ENCODE measurements at regions of chr1 and their contacts with region 1.

Region 1: DNA sequence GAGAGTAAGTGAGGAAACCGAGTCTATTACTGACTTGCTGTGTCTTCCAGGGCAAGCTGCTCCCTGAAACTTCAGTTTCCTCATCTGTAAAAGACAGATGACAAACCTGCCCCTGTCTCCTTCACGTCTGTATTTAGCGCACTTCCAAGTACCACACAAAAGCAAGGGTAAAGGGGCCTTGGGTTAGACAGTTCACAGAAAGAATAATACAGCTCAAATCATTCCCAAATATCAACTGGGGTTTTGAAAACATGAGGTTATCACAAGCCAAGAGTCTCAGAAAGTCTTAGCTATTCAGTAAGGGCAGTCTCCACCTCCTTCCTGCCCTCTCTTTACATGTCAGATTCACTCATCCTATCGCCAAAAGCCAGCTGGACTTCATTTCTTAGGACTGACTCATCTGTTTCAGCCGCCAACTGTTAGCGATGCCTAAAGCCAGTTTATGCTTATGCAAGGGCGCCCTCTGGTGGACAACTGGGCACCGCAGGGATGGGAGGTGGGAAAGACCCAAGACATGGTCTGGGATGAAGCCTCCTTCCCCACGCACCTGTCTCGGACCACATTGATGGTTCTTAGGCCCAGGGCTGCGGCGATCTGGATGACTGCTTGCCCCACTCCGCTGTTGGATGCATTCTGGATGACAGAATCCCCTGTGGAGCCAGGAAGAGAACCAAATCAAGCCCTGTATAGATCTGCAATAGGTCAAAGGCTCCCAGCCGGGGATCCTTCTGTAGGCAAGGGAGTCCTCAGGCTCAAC is 21.1 kb upstream of the SRSF4 start:
- DNase-seq: peak; percentile 94
- H3K4me3 ChIP-seq: no peak overlapping the region
- H3K27ac ChIP-seq: peak overlapping the region; percentile 53
- H3K4me1 ChIP-seq: peaks cover 12% of the 10 kb centered on the region
- H3K27me3 ChIP-seq: no peaks in the 10 kb centered on the region
- CTCF ChIP-seq: peak; percentile 97 to 98

Region 2: DNA sequence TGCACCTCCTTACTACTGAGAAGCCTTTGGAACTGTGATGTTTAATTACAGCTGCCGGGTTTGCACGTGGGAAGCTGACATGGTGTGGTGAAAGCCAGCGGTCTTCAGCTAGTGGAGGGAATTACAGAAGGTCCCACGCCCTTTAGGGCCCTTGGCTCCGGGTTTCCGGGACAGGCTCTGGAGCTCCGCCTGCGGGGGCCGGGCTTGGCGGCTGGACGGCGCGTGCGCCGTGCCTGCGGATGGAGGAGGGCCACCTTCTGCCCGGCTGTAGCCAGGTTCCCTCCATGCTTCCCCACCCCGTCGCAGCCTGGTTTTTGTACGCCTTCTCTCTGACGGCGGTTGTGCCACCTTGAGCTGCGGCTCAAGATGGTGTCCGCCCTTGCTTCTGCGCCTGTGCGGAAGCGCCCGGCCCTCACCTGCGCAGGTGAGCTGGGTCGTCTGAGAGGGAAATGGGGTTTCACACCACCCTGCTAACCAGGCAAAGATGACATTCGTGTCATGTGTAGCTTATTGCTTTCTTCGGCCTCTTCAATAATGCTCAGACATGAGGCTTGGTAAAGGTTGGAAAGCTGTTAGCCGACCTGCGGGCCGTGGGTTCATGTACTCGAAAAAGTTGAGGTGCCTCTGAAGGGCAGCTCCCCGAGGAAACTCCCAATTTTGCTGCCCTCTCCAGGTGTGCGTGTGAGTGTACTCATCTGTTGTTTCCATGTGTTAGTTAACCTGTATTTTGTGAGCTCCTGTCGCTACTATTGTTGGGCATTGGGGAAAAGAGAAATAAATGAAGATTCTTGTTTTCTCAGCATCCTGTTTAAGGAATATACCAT is 427.4 kb before region 1 on chr1:
- CTCF ChIA-PET with region 1: no interaction called
- dilution Hi-C with region 1: no loop called
- in situ Hi-C with region 1: loop called in 1 of 2 experiments (anchors 25 kb)
- intact Hi-C with region 1: no loop called
- DNase-seq: peak; percentile 68
- H3K4me3 ChIP-seq: peak overlapping the region; percentile 14 to 41 (median 38)
- H3K27ac ChIP-seq: no peak overlapping the region
- H3K4me1 ChIP-seq: peaks cover 6% of the 10 kb centered on the region
- H3K27me3 ChIP-seq: no peaks in the 10 kb centered on the region
- CTCF ChIP-seq: peak in 1 of 2 donors; percentile 11

Region 3: GRCh38 chr1:29033829-29034466 is 168.8 kb before region 1 on chr1:
- CTCF ChIA-PET with region 1: interaction called, 5 read pairs
- dilution Hi-C with region 1: no loop called
- in situ Hi-C with region 1: no loop called
- intact Hi-C with region 1: loop called (anchors 1 kb)
- DNase-seq: peak; percentile 35
- H3K4me3 ChIP-seq: no peak overlapping the region
- H3K27ac ChIP-seq: no peak overlapping the region
- H3K4me1 ChIP-seq: no peaks in the 10 kb centered on the region
- H3K27me3 ChIP-seq: no peaks in the 10 kb centered on the region
- CTCF ChIP-seq: peak; percentile 58 to 65

Region 4: GRCh38 chr1:29159773-29160172 is 43.0 kb before region 1 on chr1:
- CTCF ChIA-PET with region 1: no interaction called
- dilution Hi-C with region 1: no loop called
- in situ Hi-C with region 1: no loop called
- intact Hi-C with region 1: loop called (anchors 2 kb)
- DNase-seq: no peak
- H3K4me3 ChIP-seq: no peak overlapping the region
- H3K27ac ChIP-seq: no peak overlapping the region
- H3K4me1 ChIP-seq: no peaks in the 10 kb centered on the region
- H3K27me3 ChIP-seq: no peaks in the 10 kb centered on the region
- CTCF ChIP-seq: no peak

Region 5: DNA sequence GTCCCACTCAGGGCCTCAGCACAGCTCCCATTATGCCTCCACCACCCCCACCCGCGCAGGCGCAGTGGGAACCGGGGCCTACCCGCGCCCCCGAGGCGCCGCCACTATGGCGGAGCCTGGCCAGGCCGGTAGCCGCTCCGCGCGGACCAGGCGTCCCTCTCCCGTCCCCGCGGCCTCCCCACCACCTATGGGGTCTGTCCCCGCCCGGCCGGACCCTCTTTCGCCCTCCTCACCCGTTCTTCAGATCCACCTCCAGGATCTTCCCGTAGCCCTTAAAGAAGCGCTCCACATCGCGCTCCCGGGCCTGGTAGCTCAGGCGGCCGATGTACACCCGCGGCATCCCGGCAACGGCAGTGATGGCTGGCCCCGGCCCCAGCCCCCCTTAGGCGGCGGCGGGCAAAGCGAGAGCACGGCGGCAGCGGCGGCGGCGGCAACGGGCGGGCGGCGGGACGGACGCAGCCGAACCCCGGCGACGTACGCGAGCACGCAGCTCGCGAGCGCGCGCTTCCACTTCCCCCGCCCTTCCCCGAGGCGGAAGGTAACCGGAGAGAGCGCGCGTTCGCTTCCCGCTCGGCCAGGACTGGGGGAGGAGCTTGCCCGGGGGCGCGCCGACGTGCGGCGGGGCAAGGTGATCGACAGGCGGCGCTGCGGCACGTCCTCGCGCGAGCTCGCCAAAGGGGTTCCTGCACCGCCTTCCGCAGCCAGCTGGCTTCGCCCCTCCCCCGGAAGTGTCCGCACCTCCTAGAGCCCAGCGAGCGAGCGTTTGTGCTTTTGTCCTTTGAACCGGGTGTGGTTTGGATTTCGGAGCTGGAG is 21.1 kb before region 1 on chr1 and contains the start of gene SRSF4:
- CTCF ChIA-PET with region 1: interaction called, 4 read pairs
- dilution Hi-C with region 1: no loop called
- in situ Hi-C with region 1: no loop called
- intact Hi-C with region 1: loop called (anchors 1 kb)
- DNase-seq: peak; percentile 98
- H3K4me3 ChIP-seq: peak within 1 kb of the TSS; percentile 77 to 92 (median 91)
- H3K27ac ChIP-seq: peak within 1 kb of the TSS; percentile 92
- H3K4me1 ChIP-seq: peaks cover 21% of the 10 kb centered on the region
- H3K27me3 ChIP-seq: no peaks in the 10 kb centered on the region
- CTCF ChIP-seq: peak; percentile 40 to 75
- total RNA-seq, gene SRSF4: 22.5 to 93.1 TPM